ENCODE measurements at regions of chr7 and their contacts with region 1.

Region 1: DNA sequence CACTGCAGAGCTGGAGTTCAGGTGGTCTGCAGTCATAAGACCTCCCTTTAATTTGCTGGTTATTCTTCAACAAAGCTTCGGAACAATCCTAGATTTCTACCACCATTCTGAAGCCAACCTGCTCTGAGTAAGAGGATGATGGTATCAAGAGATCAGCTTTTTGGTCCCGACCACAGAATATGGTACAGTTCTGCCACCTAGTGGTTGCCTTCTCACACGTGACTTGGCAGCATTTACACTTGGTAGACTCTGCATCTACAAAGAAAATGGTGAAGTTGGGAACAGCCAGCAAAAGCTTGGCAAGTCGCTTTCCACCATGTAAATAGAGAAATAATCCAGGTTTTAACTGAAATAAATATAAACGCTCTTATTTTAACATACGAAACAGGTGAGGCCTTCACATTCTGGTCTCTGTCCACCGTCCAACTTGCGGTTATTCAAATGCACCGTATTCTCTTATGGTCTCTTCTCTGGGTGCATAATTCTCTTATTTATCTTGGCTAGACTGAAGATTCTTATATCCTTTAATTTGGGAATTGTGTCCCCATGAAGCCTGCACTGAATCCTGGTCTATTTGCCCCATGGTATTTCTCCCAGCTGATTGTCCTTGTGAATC is 173.9 kb upstream of the GRM3 start:
- DNase-seq: peak; percentile 57
- H3K4me3 ChIP-seq: no peak overlapping the region
- H3K27ac ChIP-seq: no peak overlapping the region
- H3K4me1 ChIP-seq: no peaks in the 10 kb centered on the region; a peak in 1 of 4 replicates
- H3K27me3 ChIP-seq: no peaks in the 10 kb centered on the region
- CTCF ChIP-seq: peak; percentile 97
- EP300 ChIP-seq: no peak
- RAD21 ChIP-seq: peak; percentile 95

Region 2: GRCh38 chr7:85882335-85882734 is 587.5 kb before region 1 on chr7:
- CTCF ChIA-PET with region 1: interaction called, 41 read pairs
- POLR2A ChIA-PET with region 1: no interaction called
- DNase-seq: no peak
- H3K4me3 ChIP-seq: no peak overlapping the region
- H3K27ac ChIP-seq: no peak overlapping the region
- H3K4me1 ChIP-seq: no peaks in the 10 kb centered on the region
- H3K27me3 ChIP-seq: no peaks in the 10 kb centered on the region
- CTCF ChIP-seq: no peak
- EP300 ChIP-seq: no peak
- RAD21 ChIP-seq: no peak

Region 3: DNA sequence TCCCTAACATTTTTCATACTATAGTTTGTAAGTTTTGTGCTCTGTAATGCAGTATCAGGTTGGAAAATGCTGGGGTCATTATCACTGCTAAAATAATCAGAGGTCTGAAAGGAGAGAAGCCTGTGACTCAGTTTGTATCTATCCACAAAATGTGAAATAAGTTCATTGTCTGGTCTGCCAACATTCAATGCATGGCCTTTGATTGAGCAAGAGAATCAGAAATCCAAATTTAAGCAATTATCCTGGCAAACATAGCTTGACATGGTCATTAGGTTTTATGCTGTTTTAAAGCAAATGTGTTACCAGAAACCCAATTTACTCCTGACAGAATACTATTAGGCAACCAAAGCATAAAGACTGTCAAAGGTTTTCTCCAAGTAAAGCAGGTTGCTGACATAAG is 573.3 kb before region 1 on chr7:
- CTCF ChIA-PET with region 1: interaction called, 60 read pairs
- POLR2A ChIA-PET with region 1: no interaction called
- DNase-seq: no peak
- H3K4me3 ChIP-seq: no peak overlapping the region
- H3K27ac ChIP-seq: no peak overlapping the region
- H3K4me1 ChIP-seq: no peaks in the 10 kb centered on the region; a peak in 1 of 4 replicates
- H3K27me3 ChIP-seq: no peaks in the 10 kb centered on the region
- CTCF ChIP-seq: no peak
- EP300 ChIP-seq: no peak
- RAD21 ChIP-seq: no peak

Region 4: DNA sequence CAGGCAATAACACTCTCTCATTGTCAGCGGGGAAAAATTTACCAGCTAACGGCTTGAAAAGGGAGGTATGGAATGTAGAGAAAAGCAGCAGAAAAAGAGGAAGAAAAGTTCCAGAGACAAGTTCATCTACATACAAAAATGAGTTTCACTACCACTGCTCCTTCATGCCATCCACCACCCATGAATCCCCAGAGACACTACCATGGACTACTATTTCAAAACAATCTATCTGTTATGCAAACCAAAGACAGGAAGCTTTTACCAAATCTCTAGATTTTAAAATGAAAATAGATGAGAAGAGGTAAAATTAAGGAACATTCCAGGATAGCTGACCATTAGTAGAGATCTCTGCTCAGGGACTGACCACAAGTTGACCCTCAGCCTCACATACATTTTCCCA is 15.0 kb before region 1 on chr7:
- CTCF ChIA-PET with region 1: interaction called, 28 read pairs
- POLR2A ChIA-PET with region 1: interaction called, 3 read pairs
- DNase-seq: no peak
- H3K4me3 ChIP-seq: no peak overlapping the region
- H3K27ac ChIP-seq: no peak overlapping the region
- H3K4me1 ChIP-seq: no peaks in the 10 kb centered on the region
- H3K27me3 ChIP-seq: no peaks in the 10 kb centered on the region
- CTCF ChIP-seq: no peak
- EP300 ChIP-seq: no peak
- RAD21 ChIP-seq: no peak

Region 5: DNA sequence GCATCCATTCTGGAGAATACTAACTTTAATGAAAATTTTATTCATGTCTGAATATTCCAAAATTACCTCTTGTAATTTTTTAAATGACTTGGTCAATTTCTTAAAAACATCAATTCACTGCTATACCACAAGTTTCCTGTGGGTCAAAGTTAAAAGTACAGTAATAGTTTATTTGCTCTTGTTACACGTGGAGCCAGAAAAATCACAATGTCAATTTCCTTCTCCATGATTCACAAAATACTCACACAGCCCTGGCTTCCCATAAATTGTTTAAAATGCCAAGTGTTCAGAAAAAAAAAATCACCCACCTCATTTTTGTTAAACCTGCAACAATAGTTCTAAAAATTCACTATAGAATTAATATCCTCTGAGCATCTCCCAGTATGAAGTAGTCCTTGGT is 34.4 kb after region 1 on chr7:
- CTCF ChIA-PET with region 1: interaction called, 13 read pairs
- POLR2A ChIA-PET with region 1: no interaction called
- DNase-seq: no peak
- H3K4me3 ChIP-seq: no peak overlapping the region
- H3K27ac ChIP-seq: no peak overlapping the region
- H3K4me1 ChIP-seq: no peaks in the 10 kb centered on the region
- H3K27me3 ChIP-seq: no peaks in the 10 kb centered on the region
- CTCF ChIP-seq: no peak
- EP300 ChIP-seq: no peak
- RAD21 ChIP-seq: no peak

Measured in SK-N-SH (cell line).